Natural killer cell (primary cell): ENCODE measurements at regions of chr9 and their contacts with region 1.

Region 1: DNA sequence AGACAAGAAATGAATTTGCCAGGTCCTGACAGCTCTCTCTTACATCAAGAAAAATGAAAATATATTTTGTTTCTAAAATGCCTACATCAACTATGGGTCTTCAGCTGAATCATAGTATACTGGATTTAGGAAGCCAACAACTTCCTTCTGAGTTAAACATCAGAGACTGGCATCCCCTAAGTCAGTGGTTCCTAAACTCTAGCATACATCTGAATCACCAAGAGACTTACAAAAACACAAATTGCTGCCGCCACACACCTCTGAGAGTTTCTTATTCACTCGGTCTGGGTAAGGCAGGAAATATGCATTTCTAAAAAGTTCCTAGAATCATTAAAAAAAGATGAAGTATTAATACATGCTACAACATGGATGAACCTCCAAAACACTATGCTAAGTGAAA is 60.4 kb upstream of the TMEM252 start:
- DNase-seq: no peak
- ATAC-seq: no peak
- H3K4me3 ChIP-seq: no peak overlapping the region
- H3K4me3 Mint-ChIP-seq: no peak overlapping the region
- H3K27ac ChIP-seq: no peak overlapping the region
- H3K27ac Mint-ChIP-seq: no peak overlapping the region
- H3K4me1 ChIP-seq: no peaks in the 10 kb centered on the region
- H3K4me1 Mint-ChIP-seq: no peaks in the 10 kb centered on the region
- H3K27me3 ChIP-seq: no peaks in the 10 kb centered on the region
- H3K27me3 Mint-ChIP-seq: peaks cover 6 to 20% of the 10 kb centered on the region in 2 donors
- CTCF ChIP-seq: no peak

Region 2: DNA sequence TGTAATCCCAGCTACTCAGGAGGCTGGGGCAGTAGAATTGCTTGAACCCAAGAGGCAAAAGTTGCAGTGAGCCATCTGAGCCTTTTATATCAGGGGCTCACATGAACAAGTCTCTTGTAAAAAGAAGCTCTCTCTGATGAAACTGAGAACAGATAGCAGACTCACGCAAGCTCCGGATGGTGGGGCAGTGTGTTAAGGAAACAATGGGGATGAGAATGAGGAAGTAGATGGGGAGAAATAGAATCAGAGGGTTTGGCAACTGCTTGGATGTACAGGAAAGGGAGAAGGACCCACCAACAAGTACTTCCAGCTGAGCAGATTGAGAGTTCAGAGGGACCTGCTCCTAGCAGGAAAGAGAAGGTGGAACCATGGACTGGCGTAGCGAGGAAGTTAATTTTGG is 79.0 kb before region 1 on chr9:
- intact Hi-C with region 1: no loop called
- DNase-seq: no peak
- ATAC-seq: no peak
- H3K4me3 ChIP-seq: no peak overlapping the region
- H3K4me3 Mint-ChIP-seq: no peak overlapping the region
- H3K27ac ChIP-seq: no peak overlapping the region
- H3K27ac Mint-ChIP-seq: no peak overlapping the region
- H3K4me1 ChIP-seq: no peaks in the 10 kb centered on the region
- H3K4me1 Mint-ChIP-seq: no peaks in the 10 kb centered on the region
- H3K27me3 ChIP-seq: no peaks in the 10 kb centered on the region
- H3K27me3 Mint-ChIP-seq: peaks cover 10 to 23% of the 10 kb centered on the region in 2 donors
- CTCF ChIP-seq: no peak

Region 3: DNA sequence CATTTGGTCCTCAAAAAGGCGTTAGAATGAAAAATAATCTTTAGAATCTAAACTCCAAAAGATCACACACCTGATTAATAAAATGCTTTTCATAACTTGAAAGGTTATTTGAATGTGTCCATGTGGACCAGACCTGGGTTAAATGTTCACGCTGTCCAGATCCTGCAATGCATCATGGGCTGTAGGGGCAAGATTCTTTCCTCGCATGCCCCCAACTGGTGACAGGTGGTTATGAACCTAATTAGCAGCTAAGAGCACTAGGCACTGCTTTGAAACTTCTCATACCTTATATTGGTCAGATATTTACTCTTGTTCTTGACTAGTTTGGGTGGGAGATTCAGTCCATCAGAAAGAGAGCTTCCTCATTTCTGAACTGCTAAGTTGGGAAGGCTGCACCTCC is 84.7 kb after region 1 on chr9:
- intact Hi-C with region 1: no loop called
- DNase-seq: no peak
- ATAC-seq: peak in 1 of 3 donors; percentile 52
- H3K4me3 ChIP-seq: no peak overlapping the region
- H3K4me3 Mint-ChIP-seq: no peak overlapping the region
- H3K27ac ChIP-seq: no peak overlapping the region
- H3K27ac Mint-ChIP-seq: no peak overlapping the region
- H3K4me1 ChIP-seq: no peaks in the 10 kb centered on the region
- H3K4me1 Mint-ChIP-seq: no peaks in the 10 kb centered on the region
- H3K27me3 ChIP-seq: peaks cover 2% of the 10 kb centered on the region
- H3K27me3 Mint-ChIP-seq: peaks cover 13 to 35% of the 10 kb centered on the region in 2 donors
- CTCF ChIP-seq: no peak

Region 4: GRCh38 chr9:68822596-68823165 is 221.6 kb after region 1 on chr9:
- intact Hi-C with region 1: loop called (anchors 5 kb)
- DNase-seq: no peak
- ATAC-seq: no peak
- H3K4me3 ChIP-seq: no peak overlapping the region
- H3K4me3 Mint-ChIP-seq: no peak overlapping the region
- H3K27ac ChIP-seq: no peak overlapping the region
- H3K27ac Mint-ChIP-seq: no peak overlapping the region
- H3K4me1 ChIP-seq: no peaks in the 10 kb centered on the region
- H3K4me1 Mint-ChIP-seq: no peaks in the 10 kb centered on the region
- H3K27me3 ChIP-seq: no peaks in the 10 kb centered on the region
- H3K27me3 Mint-ChIP-seq: no peaks in the 10 kb centered on the region
- CTCF ChIP-seq: no peak

Region 5: DNA sequence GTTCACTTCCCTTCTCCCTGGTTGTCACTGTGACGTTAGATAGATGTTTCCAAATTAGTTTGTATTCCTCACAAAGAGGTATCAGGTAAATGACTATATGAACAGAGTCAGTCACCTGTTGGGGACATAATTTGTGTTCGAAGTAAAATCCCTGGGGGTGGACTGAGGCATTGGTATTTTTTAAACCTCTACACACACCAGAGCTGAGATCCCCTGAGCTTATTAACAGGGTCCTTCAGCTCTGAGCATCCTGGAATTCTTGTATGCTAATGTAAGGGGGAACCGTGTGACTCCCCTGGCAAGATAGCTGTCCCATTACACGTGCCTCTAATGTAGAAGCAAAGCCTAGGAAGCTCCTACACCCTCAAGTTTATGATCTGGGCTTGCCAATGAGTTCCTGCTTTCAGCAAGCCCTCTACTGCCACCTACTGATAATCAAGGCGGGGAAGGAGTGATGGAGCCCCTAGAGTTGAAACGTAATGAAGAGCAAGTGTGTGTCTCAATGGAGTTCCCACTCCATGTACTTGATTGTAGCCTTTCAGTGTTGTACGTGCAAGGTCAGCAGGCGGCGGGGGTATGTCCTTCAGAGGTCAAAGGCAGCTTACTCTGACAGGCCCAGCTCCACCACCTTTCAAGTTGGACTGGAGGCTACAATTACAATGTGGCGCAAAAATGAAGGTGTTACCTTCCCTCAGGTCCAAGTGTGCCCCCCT is 398.5 kb after region 1 on chr9:
- intact Hi-C with region 1: no loop called
- DNase-seq: peak; percentile 28 to 82
- ATAC-seq: peak; percentile 83 to 85 (median 84)
- H3K4me3 ChIP-seq: no peak overlapping the region
- H3K4me3 Mint-ChIP-seq: no peak overlapping the region
- H3K27ac ChIP-seq: no peak overlapping the region
- H3K27ac Mint-ChIP-seq: peak overlapping the region; percentile 26 to 30
- H3K4me1 ChIP-seq: peaks cover 15% of the 10 kb centered on the region
- H3K4me1 Mint-ChIP-seq: peaks cover 30% of the 10 kb centered on the region in 2 donors
- H3K27me3 ChIP-seq: no peaks in the 10 kb centered on the region
- H3K27me3 Mint-ChIP-seq: peaks cover 0 to 3% of the 10 kb centered on the region in 2 donors
- CTCF ChIP-seq: peak; percentile 78

Region 6: GRCh38 chr9:69871118-69871834 is 1270.2 kb after region 1 on chr9:
- intact Hi-C with region 1: no loop called
- DNase-seq: no peak
- ATAC-seq: no peak
- H3K4me3 ChIP-seq: no peak overlapping the region
- H3K4me3 Mint-ChIP-seq: no peak overlapping the region
- H3K27ac ChIP-seq: no peak overlapping the region
- H3K27ac Mint-ChIP-seq: no peak overlapping the region
- H3K4me1 ChIP-seq: no peaks in the 10 kb centered on the region
- H3K4me1 Mint-ChIP-seq: no peaks in the 10 kb centered on the region
- H3K27me3 ChIP-seq: no peaks in the 10 kb centered on the region
- H3K27me3 Mint-ChIP-seq: peaks cover 6 to 21% of the 10 kb centered on the region in 2 donors
- CTCF ChIP-seq: no peak